ENCODE measurements at regions of chr7 and their contacts with region 1.

Region 1: DNA sequence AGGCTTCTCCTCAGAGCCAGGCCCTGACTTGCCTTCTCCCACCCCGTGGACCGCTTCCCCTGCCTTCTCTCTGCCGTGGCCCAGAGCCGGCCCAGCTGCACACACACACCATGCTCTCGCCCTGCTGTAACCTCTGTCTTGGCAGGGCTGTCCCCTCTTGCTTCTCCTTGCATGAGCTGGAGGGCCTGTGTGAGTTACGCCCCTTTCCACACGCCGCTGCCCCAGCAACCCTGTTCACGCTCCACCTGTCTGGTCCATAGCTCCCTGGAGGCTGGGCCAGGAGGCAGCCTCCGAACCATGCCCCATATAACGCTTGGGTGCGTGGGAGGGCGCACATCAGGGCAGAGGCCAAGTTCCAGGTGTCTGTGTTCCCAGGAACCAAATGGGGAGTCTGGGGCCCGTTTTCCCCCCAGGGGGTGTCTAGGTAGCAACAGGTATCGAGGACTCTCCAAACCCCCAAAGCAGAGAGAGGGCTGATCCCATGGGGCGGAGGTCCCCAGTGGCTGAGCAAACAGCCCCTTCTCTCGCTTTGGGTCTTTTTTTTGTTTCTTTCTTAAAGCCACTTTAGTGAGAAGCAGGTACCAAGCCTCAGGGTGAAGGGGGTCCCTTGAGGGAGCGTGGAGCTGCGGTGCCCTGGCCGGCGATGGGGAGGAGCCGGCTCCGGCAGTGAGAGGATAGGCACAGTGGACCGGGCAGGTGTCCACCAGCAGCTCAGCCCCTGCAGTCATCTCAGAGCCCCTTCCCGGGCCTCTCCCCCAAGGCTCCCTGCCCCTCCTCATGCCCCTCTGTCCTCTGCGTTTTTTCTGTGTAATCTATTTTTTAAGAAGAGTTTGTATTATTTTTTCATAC is 38.0 kb downstream of the LIMK1 start:
- DNase-seq: no peak
- ATAC-seq: peak in 2 of 4 donors; percentile 26 to 28
- H3K4me3 ChIP-seq: no peak overlapping the region
- H3K27ac ChIP-seq: no peak overlapping the region
- H3K4me1 ChIP-seq: no peaks in the 10 kb centered on the region
- H3K27me3 ChIP-seq: no peaks in the 10 kb centered on the region
- CTCF ChIP-seq: no peak

Region 2: GRCh38 chr7:74155792-74156395 is 34.3 kb after region 1 on chr7:
- intact Hi-C with region 1: loop called (anchors 5 kb)
- DNase-seq: no peak
- ATAC-seq: no peak
- H3K4me3 ChIP-seq: no peak overlapping the region
- H3K27ac ChIP-seq: no peak overlapping the region
- H3K4me1 ChIP-seq: no peaks in the 10 kb centered on the region
- H3K27me3 ChIP-seq: no peaks in the 10 kb centered on the region
- CTCF ChIP-seq: no peak

Region 3: GRCh38 chr7:74217455-74218342 is 96.1 kb after region 1 on chr7:
- intact Hi-C with region 1: loop called in 1 of 2 experiments (anchors 10 kb)
- DNase-seq: no peak
- ATAC-seq: no peak
- H3K4me3 ChIP-seq: no peak overlapping the region
- H3K27ac ChIP-seq: no peak overlapping the region
- H3K4me1 ChIP-seq: no peaks in the 10 kb centered on the region
- H3K27me3 ChIP-seq: no peaks in the 10 kb centered on the region
- CTCF ChIP-seq: no peak

Measured in psoas muscle (tissue), 8 donors.